GM10248 (cell line): ENCODE measurements at regions of chr2 and their contacts with region 1.

Region 1: DNA sequence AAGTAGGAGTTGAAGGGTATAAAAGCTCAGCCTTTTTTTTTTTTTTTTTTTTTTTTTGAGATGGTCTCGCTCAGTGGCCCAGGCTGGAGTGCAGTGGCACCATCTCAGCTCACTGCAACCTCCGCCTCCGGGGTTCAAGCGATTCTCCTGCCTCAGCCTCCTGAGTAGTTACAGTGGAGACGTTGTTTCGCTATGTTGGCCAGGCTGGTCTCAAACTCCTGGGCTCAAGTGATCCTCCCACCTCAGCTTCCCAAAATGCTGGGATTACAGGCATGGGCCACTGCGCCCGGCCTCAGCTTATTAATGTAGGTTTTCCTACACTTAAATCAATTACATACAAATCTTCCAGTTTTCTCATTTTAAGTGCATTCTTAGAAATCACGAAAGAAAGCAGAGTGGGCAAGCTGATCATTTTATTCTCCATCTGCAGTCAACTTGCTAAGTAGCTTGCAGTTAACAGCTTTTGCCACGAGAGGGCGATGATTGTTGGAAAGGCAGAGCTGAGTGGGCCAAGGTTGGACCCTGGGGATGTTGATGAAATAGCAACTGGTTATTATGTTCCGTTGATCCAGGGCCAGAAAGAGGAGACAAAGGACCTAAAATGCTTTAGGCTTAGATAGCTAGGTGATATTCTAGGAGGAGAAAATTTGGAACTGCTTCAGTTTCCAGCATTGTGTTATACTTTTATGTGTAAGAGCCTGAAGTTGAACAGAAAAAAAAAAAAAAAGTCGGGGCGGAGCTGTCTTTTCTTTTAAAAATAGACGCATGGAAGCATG is 234.4 kb upstream of the EPAS1 start:
- DNase-seq: peak; percentile 68
- CTCF ChIP-seq: peak; percentile 91

Region 2: GRCh38 chr2:45813003-45813941 is 249.6 kb before region 1 on chr2:
- CTCF ChIA-PET with region 1: no interaction called
- POLR2A ChIA-PET with region 1: no interaction called
- DNase-seq: no peak
- CTCF ChIP-seq: no peak

Region 3: GRCh38 chr2:46029332-46029811 is 33.5 kb before region 1 on chr2:
- CTCF ChIA-PET with region 1: interaction called, 12 read pairs
- POLR2A ChIA-PET with region 1: no interaction called
- DNase-seq: no peak
- CTCF ChIP-seq: peak; percentile 10

Region 4: DNA sequence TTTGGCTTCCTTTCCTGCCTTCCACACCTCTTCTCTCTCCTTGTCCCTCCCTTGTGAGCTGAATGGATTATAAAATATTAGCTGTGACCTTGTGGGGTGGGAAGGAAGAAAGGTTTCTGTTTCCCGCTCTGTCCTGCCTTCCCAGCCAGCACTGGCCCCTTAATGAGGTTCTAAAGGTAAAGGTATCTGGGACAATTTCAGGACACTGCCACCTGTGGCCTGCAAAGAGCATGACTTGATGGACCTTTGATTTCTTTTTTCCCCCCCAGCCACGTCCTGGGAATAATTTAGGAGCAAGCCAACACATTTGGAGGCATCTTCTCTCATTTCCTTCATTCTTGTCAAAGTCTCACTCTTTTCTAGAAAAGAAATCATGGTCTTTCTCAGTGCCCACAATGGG is 12.3 kb before region 1 on chr2:
- CTCF ChIA-PET with region 1: interaction called, 30 read pairs
- POLR2A ChIA-PET with region 1: no interaction called
- DNase-seq: no peak
- CTCF ChIP-seq: no peak

Region 5: GRCh38 chr2:46079996-46080560 is 17.3 kb after region 1 on chr2:
- CTCF ChIA-PET with region 1: interaction called, 16 read pairs
- POLR2A ChIA-PET with region 1: no interaction called
- DNase-seq: peak; percentile 25
- CTCF ChIP-seq: no peak

Region 6: GRCh38 chr2:46296840-46297545 is 234.2 kb after region 1 on chr2 and contains the start of gene EPAS1:
- CTCF ChIA-PET with region 1: interaction called, 14 read pairs
- POLR2A ChIA-PET with region 1: no interaction called
- DNase-seq: peak; percentile 95
- CTCF ChIP-seq: no peak

Region 7: GRCh38 chr2:46364797-46365457 is 302.1 kb after region 1 on chr2:
- CTCF ChIA-PET with region 1: interaction called, 12 read pairs
- POLR2A ChIA-PET with region 1: no interaction called
- DNase-seq: peak; percentile 70
- CTCF ChIP-seq: peak; percentile 70